ENCODE measurements at regions of chr11 and their contacts with region 1.

Region 1: DNA sequence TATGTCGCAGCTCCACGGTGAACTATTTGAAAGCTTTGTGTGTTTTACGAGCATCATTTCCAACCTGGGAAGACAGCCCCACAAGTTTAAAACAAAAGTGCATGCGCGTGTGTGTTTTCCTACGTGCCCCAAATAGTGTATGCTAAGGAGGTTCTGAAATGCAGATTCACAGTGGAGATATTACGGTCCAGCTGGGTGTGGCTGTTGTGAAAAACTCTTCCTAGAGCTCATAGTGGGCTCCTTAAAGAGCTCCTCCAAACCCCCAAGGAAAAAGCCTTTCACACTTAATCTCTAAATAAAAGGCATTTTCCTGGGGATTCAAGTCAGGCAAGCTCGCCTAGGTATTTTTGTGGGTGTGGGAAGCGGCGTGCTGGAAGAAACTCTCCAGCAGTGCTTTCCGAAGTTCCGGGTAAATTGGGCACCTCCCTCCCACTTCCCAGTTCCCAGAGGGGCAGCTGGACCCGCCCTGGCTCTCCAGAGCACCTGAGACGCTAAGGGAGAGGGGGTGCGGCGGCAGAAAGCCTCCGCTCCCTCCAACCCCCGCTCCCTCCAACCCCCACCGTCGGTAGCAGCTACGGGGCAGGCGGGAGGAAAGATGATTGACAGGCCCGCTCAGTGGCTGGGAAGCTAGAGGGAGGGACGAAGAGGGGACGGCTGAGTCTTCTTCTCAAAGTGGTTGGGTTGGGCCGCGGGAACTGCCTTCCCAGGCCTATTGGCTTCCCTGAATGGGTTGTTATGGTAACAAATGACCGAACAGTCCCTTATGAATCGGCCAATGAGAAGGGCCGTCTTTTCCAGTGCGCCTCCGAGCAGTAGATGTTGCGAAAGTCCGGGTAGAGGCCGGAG is 558 bp upstream of the PCF11 start:
- DNase-seq: peak; percentile 100
- H3K4me3 ChIP-seq: peak overlapping the region; percentile 76 to 93 (median 83)
- H3K27ac ChIP-seq: peak overlapping the region; percentile 57
- H3K4me1 ChIP-seq: peaks cover 23% of the 10 kb centered on the region
- H3K27me3 ChIP-seq: no peaks in the 10 kb centered on the region
- CTCF ChIP-seq: no peak
- POLR2A ChIP-seq: no peak

Region 2: GRCh38 chr11:82790723-82791484 is 365.5 kb before region 1 on chr11:
- CTCF ChIA-PET with region 1: no interaction called
- POLR2A ChIA-PET with region 1: interaction called, 7 read pairs
- dilution Hi-C with region 1: no loop called
- intact Hi-C with region 1: loop called (anchors 1 kb)
- DNase-seq: peak; percentile 45
- H3K4me3 ChIP-seq: no peak overlapping the region
- H3K27ac ChIP-seq: no peak overlapping the region
- H3K4me1 ChIP-seq: peaks cover 43% of the 10 kb centered on the region
- H3K27me3 ChIP-seq: no peaks in the 10 kb centered on the region
- CTCF ChIP-seq: no peak
- POLR2A ChIP-seq: no peak

Region 3: GRCh38 chr11:82906244-82906654 is 250.1 kb before region 1 on chr11:
- CTCF ChIA-PET with region 1: interaction called, 14 read pairs
- POLR2A ChIA-PET with region 1: interaction called, 8 read pairs
- dilution Hi-C with region 1: no loop called
- intact Hi-C with region 1: loop called (anchors 1 kb)
- DNase-seq: peak; percentile 68
- H3K4me3 ChIP-seq: no peak overlapping the region
- H3K27ac ChIP-seq: no peak overlapping the region
- H3K4me1 ChIP-seq: peaks cover 20% of the 10 kb centered on the region
- H3K27me3 ChIP-seq: no peaks in the 10 kb centered on the region
- CTCF ChIP-seq: peak; percentile 12 to 25
- POLR2A ChIP-seq: no peak

Region 4: DNA sequence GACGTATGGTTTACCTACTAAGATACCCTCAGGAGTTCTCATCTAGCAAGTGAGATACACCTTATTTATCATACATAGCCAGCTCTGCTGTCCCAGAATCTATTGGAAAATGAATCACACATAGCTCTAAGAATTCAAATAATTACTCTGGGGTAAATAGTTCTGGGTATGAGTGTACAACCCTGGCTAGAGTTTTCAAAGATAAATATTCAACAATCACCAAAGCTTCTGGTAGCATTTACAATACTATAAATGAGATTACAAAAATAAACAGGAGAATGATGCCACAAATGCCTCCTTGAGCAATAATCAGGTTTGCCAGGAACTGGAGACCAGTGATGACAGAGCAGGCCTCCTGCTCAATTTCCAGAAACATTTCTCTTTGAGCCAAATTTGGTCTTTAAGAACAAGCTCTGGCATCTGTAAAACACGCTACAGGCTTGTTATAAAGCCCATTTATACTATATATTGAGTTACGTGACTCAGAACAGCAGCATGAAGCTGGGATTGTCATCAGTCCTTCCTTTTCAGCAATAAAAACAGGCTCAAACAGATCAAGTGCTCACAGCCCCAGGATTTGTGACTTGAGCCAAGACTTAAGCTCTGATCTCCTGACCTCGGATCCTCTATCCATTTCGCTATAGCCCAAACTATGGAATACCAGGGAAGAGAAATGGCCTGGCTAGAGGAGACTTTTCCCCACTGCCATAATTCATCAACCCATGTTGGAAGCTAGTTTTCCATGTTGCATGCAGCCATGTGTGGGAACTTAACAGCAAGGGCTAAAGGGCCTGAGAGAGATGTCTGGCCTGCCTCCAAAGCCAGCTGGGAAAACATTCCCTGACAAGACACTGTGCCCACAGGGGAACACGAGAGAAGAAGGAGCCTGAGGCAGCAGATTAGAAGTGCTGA is 104.4 kb before region 1 on chr11:
- CTCF ChIA-PET with region 1: no interaction called
- POLR2A ChIA-PET with region 1: interaction called, 5 read pairs
- dilution Hi-C with region 1: no loop called
- intact Hi-C with region 1: loop called (anchors 5 kb)
- DNase-seq: peak; percentile 94
- H3K4me3 ChIP-seq: no peak overlapping the region
- H3K27ac ChIP-seq: peak overlapping the region; percentile 88
- H3K4me1 ChIP-seq: peaks cover 59% of the 10 kb centered on the region
- H3K27me3 ChIP-seq: no peaks in the 10 kb centered on the region
- CTCF ChIP-seq: no peak
- POLR2A ChIP-seq: no peak

Region 5: DNA sequence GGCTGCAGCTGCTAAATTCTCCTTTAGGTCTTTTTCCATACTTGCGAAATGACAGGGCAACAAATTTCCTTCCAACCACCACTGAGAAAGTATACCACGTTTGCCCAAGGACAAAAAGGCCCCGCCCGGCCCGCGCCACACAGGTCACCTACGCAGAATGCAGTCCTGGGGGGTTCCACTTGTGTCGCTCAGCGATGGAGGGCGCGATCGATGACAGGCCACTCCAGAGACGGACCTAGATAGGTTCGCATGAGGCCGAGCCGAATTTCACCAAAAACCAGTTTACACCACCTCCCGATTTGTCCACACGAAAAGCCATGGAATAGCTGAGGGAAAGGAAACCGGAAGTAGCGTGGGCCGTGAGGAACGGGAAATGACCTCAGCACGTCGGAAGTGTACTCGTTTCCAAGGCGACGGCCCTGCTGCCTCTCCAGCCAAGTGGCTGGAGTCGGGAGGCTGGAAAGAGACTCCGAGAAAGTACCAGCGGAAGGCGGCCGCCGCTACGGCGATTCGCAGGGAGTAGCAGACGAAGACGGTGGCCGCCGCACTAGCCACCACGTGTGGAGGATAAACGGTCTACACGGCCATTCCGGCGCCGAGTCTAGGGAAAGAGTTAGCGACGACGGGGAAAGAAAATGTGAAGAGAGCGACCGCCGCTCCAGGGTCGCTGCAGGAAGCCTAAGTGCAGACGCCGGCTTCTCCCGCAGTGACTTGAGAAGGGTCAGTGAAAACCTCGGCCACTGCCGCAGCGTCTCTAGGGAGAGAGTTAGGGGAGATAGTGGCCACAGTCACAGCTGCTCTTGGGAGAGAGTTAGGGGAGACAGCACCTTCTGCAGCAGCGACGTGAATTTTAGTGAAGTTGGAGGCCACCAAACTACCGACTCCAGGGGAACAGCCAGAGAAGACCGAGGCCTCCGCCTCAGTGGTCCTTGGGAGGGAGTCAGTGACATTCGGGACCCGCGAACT is 37.2 kb after region 1 on chr11 and contains the start of gene ANKRD42:
- CTCF ChIA-PET with region 1: interaction called, 6 read pairs
- POLR2A ChIA-PET with region 1: interaction called, 6 read pairs
- dilution Hi-C with region 1: no loop called
- intact Hi-C with region 1: loop called (anchors 1 kb)
- DNase-seq: peak; percentile 96
- H3K4me3 ChIP-seq: peak within 1 kb of the TSS; percentile 31 to 87 (median 83)
- H3K27ac ChIP-seq: peak within 1 kb of the TSS; percentile 72
- H3K4me1 ChIP-seq: peaks cover 17% of the 10 kb centered on the region
- H3K27me3 ChIP-seq: no peaks in the 10 kb centered on the region
- CTCF ChIP-seq: no peak
- POLR2A ChIP-seq: peak; percentile 92
- total RNA-seq, gene ANKRD42: 6.6 and 7.6 TPM in 2 replicates